ENCODE measurements at regions of chr5 and their contacts with region 1.

Region 1: DNA sequence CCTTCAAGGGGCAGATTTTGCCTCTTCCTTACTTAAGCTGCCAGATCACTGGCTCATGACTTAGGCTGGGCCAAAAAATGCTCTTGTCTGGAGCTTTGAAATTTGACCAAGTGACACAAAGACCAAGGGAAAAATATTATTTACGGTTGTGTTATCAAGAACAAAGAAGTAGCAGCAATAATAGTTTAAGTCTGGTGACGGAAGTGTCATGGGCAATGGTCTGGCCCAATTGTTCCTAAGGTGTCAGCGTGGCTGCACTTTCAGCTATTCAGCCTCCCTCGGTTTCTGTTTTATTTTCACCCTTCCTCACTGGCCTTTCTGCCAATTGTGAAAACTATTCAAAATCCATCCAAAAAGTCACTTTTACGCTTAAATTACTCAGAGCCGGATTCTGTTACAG is 185.3 kb downstream of the CDH18 start:
- DNase-seq: no peak
- H3K4me3 ChIP-seq: no peak overlapping the region
- H3K27ac ChIP-seq: no peak overlapping the region
- H3K4me1 ChIP-seq: no peaks in the 10 kb centered on the region
- H3K27me3 ChIP-seq: no peaks in the 10 kb centered on the region
- CTCF ChIP-seq: no peak
- POLR2A ChIP-seq: no peak

Region 2: DNA sequence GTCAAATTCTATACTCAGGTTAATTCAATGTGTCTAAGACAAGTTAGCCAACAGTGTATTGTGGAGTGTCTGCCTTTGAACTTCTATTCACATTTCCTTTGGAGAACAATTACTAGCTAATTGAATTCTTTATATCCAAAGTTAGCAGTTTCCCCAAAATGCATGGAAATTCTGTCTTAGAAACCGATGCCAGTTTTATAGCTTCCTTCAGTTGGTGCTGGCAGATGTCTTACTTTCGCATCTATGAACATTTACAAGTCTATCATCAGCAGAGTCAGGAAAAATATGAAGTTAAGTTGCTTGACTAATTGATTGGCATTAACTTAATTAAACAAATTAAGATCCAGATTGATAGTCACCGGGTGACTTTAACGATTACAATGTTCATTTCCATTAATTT is 712.9 kb after region 1 on chr5:
- intact Hi-C with region 1: loop called (anchors 5 kb)
- DNase-seq: no peak
- H3K4me3 ChIP-seq: no peak overlapping the region
- H3K27ac ChIP-seq: no peak overlapping the region
- H3K4me1 ChIP-seq: no peaks in the 10 kb centered on the region
- H3K27me3 ChIP-seq: no peaks in the 10 kb centered on the region
- CTCF ChIP-seq: no peak
- POLR2A ChIP-seq: no peak